H1 (cell line): ENCODE measurements at regions of chr2 and their contacts with region 1.

Region 1: DNA sequence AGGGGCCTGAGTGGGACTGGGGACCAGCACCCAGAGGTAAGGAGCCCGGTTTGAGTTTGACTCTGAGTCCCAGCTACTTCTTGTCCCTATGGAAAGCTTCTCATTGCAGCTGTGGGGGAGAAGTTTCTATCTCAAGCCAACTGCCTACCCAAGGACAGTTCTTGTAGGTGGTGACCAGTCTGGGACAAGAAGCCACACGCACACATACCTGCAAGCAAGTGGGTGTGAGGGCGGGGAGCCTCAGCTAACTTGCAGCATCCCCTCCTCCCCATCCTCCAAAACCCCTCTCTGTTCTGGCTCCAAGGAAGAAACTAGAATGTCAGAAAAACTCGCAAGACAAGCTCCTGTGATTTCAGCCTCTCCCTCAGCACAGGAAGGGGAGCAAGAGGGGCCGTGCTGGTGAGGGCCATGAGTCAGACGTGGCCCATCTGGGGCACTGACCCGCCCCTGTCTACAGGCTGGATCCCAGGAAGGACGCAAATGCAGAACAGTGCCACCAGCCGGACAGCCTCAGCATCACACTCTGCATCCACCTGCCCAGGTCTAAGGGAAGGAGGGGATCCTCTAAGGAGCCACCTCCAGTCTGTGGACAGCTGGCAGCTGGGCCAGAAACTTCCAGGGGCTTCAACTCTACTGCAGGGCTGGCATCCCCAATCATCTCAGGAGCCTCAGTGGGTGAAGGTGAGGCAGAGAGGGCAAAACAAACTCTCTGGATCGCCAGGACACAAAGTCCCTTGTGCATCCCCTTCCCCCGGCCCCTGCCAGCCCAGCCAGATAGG is 103.4 kb downstream of the TNS1 start:
- DNase-seq: peak; percentile 71 to 93
- H3K4me3 ChIP-seq: no peak overlapping the region
- H3K27ac ChIP-seq: no peak overlapping the region
- H3K4me1 ChIP-seq: peaks cover 0 to 4% (median 2%) of the 10 kb centered on the region in 4 experiments; a peak in 4 of 7 replicates
- H3K27me3 ChIP-seq: no peaks in the 10 kb centered on the region; a peak in 1 of 7 replicates
- CTCF ChIP-seq: peak; percentile 79 to 98 (median 90)
- EP300 ChIP-seq: no peak
- POLR2A ChIP-seq: no peak
- RAD21 ChIP-seq: peak; percentile 51 to 62

Region 2: DNA sequence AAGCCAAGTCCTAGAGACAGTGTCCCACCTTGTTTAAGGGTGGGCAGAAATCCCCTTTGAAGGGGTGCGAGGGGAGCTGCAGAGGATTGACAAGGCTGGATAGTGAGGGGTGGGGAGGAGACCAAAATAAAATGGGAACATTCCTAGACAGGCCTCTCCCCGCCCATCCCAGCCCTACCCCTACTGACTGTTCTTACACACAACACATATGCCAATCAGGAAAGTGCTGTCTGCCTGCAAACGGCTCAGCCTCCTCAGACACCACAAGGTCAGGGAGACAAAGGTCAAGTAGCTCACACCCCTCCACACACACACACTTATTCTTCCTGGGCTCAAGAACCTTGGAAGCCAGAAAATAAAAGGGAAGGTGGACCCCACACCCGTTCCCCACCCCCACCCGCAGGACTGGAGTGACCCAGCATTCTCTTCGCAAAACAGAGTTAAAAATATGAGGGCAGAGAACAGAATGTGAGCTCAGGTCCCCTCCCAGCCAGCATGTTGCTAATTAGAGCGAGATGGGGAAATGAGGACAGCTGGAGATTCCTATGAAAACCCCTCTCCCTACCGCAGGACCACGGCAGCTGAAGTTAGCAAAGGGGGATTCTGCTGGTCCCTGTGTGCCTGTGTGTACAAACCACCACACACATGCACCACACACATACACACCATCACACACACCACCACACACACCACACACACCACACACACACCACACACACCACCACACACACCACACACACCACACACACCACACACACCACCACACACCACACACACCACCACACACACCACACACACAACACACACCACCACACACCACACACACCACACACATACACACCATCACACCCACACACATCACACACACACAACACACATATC is 94.4 kb before region 1 on chr2:
- CTCF ChIA-PET with region 1: interaction called, 10 read pairs
- POLR2A ChIA-PET with region 1: no interaction called
- DNase-seq: no peak
- H3K4me3 ChIP-seq: no peak overlapping the region
- H3K27ac ChIP-seq: no peak overlapping the region
- H3K4me1 ChIP-seq: peaks cover 0 to 5% (median 0%) of the 10 kb centered on the region in 4 experiments; a peak in 1 of 7 replicates
- H3K27me3 ChIP-seq: no peaks in the 10 kb centered on the region
- CTCF ChIP-seq: no peak
- EP300 ChIP-seq: no peak
- POLR2A ChIP-seq: no peak
- RAD21 ChIP-seq: no peak

Region 3: GRCh38 chr2:217880287-217880889 is 19.0 kb before region 1 on chr2:
- CTCF ChIA-PET with region 1: interaction called, 122 read pairs
- POLR2A ChIA-PET with region 1: interaction called, 3 read pairs
- DNase-seq: no peak
- H3K4me3 ChIP-seq: no peak overlapping the region
- H3K27ac ChIP-seq: no peak overlapping the region
- H3K4me1 ChIP-seq: peaks cover 0 to 9% (median under 1%) of the 10 kb centered on the region in 4 experiments; a peak in 4 of 7 replicates
- H3K27me3 ChIP-seq: no peaks in the 10 kb centered on the region
- CTCF ChIP-seq: peak in 1 of 3 experiments; percentile 18; a peak in 1 of 4 replicates
- EP300 ChIP-seq: no peak
- POLR2A ChIP-seq: no peak
- RAD21 ChIP-seq: no peak

Region 4: DNA sequence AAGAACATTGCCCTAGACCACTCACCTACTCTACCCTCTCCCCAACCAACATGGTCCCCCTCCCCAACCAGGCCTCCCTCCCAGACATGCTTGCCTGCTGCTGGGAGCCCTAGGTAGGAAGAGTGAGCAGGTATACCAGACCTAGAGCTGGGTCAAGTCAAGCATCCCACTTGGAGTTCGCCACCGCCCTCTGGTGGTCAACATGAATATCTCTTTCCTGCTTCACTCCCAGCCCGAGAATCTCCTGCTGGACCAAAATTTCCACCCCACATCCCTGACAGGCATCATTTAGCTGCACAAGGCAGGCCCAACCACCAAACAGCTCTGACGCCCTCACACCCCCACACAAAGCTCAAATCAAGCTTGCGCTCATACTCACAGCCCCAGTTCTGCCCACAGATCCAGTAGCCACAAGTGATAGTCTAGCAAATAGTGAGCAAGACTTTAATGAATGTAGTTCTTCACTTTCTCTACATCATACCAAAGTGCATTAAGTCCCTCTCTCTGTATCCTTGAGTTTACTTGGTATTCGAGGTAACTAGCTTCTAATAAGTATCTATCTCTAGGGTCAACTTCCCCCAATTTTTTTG is 12.6 kb before region 1 on chr2:
- CTCF ChIA-PET with region 1: interaction called, 122 read pairs
- POLR2A ChIA-PET with region 1: interaction called, 4 read pairs
- DNase-seq: peak; percentile 47 to 92
- H3K4me3 ChIP-seq: no peak overlapping the region
- H3K27ac ChIP-seq: no peak overlapping the region
- H3K4me1 ChIP-seq: no peaks in the 10 kb centered on the region
- H3K27me3 ChIP-seq: no peaks in the 10 kb centered on the region
- CTCF ChIP-seq: peak; percentile 88 to 95 (median 94)
- EP300 ChIP-seq: no peak
- POLR2A ChIP-seq: no peak
- RAD21 ChIP-seq: peak; percentile 90

Region 5: GRCh38 chr2:217918308-217919024 is 19.0 kb after region 1 on chr2:
- CTCF ChIA-PET with region 1: interaction called, 121 read pairs
- POLR2A ChIA-PET with region 1: interaction called, 4 read pairs
- DNase-seq: no peak
- H3K4me3 ChIP-seq: no peak overlapping the region
- H3K27ac ChIP-seq: no peak overlapping the region
- H3K4me1 ChIP-seq: peaks cover 9 to 48% (median 33%) of the 10 kb centered on the region in 4 experiments
- H3K27me3 ChIP-seq: peaks cover 0 to 4% (median 0%) of the 10 kb centered on the region in 4 experiments; a peak in 3 of 7 replicates
- CTCF ChIP-seq: peak; percentile 53 to 63 (median 55)
- EP300 ChIP-seq: no peak
- POLR2A ChIP-seq: no peak
- RAD21 ChIP-seq: peak in 1 of 2 experiments; percentile 45; a peak in 3 of 4 replicates

Region 6: GRCh38 chr2:217934321-217935131 is 35.1 kb after region 1 on chr2:
- CTCF ChIA-PET with region 1: interaction called, 15 read pairs
- POLR2A ChIA-PET with region 1: no interaction called
- DNase-seq: no peak
- H3K4me3 ChIP-seq: no peak overlapping the region
- H3K27ac ChIP-seq: 0 out of 2 replicates have a peak overlapping the region, but pooled peaks have one; percentile 33
- H3K4me1 ChIP-seq: peaks cover 11 to 37% (median 23%) of the 10 kb centered on the region in 4 experiments
- H3K27me3 ChIP-seq: no peaks in the 10 kb centered on the region; a peak in 1 of 7 replicates
- CTCF ChIP-seq: no peak
- EP300 ChIP-seq: no peak
- POLR2A ChIP-seq: no peak
- RAD21 ChIP-seq: no peak